ENCODE measurements at regions of chr5 and their contacts with region 1.

Region 1: DNA sequence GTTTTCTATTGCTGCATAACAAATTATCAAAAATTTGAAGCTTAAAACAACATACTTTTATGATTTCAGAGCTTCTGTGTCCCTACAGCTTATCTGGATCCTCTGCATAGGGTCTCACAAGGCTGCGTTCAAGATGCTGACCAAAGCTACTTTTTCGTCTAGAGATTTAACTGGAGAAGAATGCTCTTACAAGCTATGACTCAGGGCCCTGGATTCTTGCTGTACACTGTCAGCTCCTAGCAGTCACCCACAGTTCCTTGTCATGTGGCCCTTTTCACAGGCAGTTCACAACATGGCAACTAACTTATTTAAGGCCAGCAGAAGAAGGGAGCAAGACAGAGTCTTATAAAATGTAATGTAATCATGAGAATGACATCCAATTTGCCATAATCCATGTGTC is 70.8 kb upstream of the FAM174A start:
- DNase-seq: peak; percentile 26
- H3K4me3 ChIP-seq: no peak overlapping the region
- H3K27ac ChIP-seq: no peak overlapping the region
- H3K4me1 ChIP-seq: no peaks in the 10 kb centered on the region
- H3K27me3 ChIP-seq: no peaks in the 10 kb centered on the region
- CTCF ChIP-seq: no peak

Region 2: GRCh38 chr5:100186181-100186580 is 278.2 kb before region 1 on chr5:
- CTCF ChIA-PET with region 1: no interaction called
- dilution Hi-C with region 1: no loop called
- in situ Hi-C with region 1: no loop called
- intact Hi-C with region 1: no loop called
- DNase-seq: no peak
- H3K4me3 ChIP-seq: no peak overlapping the region
- H3K27ac ChIP-seq: no peak overlapping the region
- H3K4me1 ChIP-seq: no peaks in the 10 kb centered on the region
- H3K27me3 ChIP-seq: no peaks in the 10 kb centered on the region
- CTCF ChIP-seq: no peak

Region 3: GRCh38 chr5:101153526-101153925 is 689.1 kb after region 1 on chr5:
- CTCF ChIA-PET with region 1: interaction called, 10 read pairs
- dilution Hi-C with region 1: no loop called
- in situ Hi-C with region 1: no loop called
- intact Hi-C with region 1: no loop called
- DNase-seq: no peak
- H3K4me3 ChIP-seq: no peak overlapping the region
- H3K27ac ChIP-seq: no peak overlapping the region
- H3K4me1 ChIP-seq: no peaks in the 10 kb centered on the region
- H3K27me3 ChIP-seq: no peaks in the 10 kb centered on the region
- CTCF ChIP-seq: no peak

Measured in mammary epithelial cell (primary cell).